ENCODE measurements at regions of chr6 and their contacts with region 1.

Region 1: GRCh38 chr6:131532580-131533039 is 40.4 kb upstream of the ARG1 start:
- DNase-seq: no peak
- ATAC-seq: peak; percentile 37; the same call in 2 of the 3 replicates
- H3K4me3 ChIP-seq: no peak overlapping the region
- H3K27ac ChIP-seq: no peak overlapping the region
- H3K4me1 ChIP-seq: peaks cover 34% of the 10 kb centered on the region
- H3K27me3 ChIP-seq: 0 out of 5 replicates have a peak, but pooled peaks cover 0 to 3% of the 10 kb centered on the region in 2 experiments
- CTCF ChIP-seq: no peak
- EP300 ChIP-seq: no peak
- POLR2A ChIP-seq: no peak
- RAD21 ChIP-seq: no peak

Region 2: GRCh38 chr6:131116749-131117360 is 415.8 kb before region 1 on chr6:
- CTCF ChIA-PET with region 1: no interaction called
- POLR2A ChIA-PET with region 1: no interaction called
- in situ Hi-C with region 1: no loop called
- intact Hi-C with region 1: loop called (anchors 5 kb)
- DNase-seq: peak; percentile 68
- ATAC-seq: peak; percentile 69
- H3K4me3 ChIP-seq: no peak overlapping the region
- H3K27ac ChIP-seq: no peak overlapping the region
- H3K4me1 ChIP-seq: peaks cover 14% of the 10 kb centered on the region
- H3K27me3 ChIP-seq: no peaks in the 10 kb centered on the region
- CTCF ChIP-seq: peak; percentile 80
- EP300 ChIP-seq: no peak
- POLR2A ChIP-seq: no peak
- RAD21 ChIP-seq: peak; percentile 77; the same call in 1 of the 2 replicates

Region 3: DNA sequence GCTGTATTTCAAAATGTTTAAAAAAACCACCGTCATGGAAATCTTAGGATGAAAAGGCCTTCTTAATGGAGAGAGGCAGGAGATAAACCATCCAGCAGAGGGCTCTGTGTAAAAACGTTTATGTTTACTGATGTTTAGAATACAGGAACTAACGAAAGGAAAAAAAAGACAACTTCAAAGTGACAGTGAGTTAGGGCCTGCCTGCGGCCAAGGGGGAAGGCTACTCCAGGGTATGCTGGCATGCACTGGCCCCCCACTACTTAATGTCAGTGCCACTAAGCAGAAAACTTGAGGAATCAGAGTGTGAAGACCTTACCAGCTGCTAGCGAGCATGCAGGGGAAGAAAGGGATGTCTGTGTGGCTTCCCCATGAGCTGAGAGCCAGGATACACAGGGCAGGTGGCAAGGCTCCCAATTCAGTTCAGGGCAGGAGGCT is 349.6 kb before region 1 on chr6:
- CTCF ChIA-PET with region 1: interaction called, 6 read pairs
- POLR2A ChIA-PET with region 1: no interaction called
- in situ Hi-C with region 1: loop called (anchors 5 kb)
- intact Hi-C with region 1: loop called (anchors 5 kb)
- DNase-seq: peak; percentile 35
- ATAC-seq: peak; percentile 74
- H3K4me3 ChIP-seq: no peak overlapping the region
- H3K27ac ChIP-seq: no peak overlapping the region
- H3K4me1 ChIP-seq: no peaks in the 10 kb centered on the region
- H3K27me3 ChIP-seq: no peaks in the 10 kb centered on the region; a peak in 1 of 5 replicates
- CTCF ChIP-seq: peak; percentile 37
- EP300 ChIP-seq: no peak
- POLR2A ChIP-seq: no peak
- RAD21 ChIP-seq: no peak

Region 4: GRCh38 chr6:131199568-131200272 is 332.9 kb before region 1 on chr6:
- CTCF ChIA-PET with region 1: interaction called, 13 read pairs
- POLR2A ChIA-PET with region 1: no interaction called
- in situ Hi-C with region 1: no loop called
- intact Hi-C with region 1: loop called (anchors 1 kb)
- DNase-seq: peak; percentile 63
- ATAC-seq: peak; percentile 99
- H3K4me3 ChIP-seq: no peak overlapping the region
- H3K27ac ChIP-seq: no peak overlapping the region
- H3K4me1 ChIP-seq: no peaks in the 10 kb centered on the region
- H3K27me3 ChIP-seq: no peaks in the 10 kb centered on the region
- CTCF ChIP-seq: peak; percentile 84
- EP300 ChIP-seq: no peak
- POLR2A ChIP-seq: no peak
- RAD21 ChIP-seq: peak; percentile 68; the same call in 1 of the 2 replicates

Region 5: DNA sequence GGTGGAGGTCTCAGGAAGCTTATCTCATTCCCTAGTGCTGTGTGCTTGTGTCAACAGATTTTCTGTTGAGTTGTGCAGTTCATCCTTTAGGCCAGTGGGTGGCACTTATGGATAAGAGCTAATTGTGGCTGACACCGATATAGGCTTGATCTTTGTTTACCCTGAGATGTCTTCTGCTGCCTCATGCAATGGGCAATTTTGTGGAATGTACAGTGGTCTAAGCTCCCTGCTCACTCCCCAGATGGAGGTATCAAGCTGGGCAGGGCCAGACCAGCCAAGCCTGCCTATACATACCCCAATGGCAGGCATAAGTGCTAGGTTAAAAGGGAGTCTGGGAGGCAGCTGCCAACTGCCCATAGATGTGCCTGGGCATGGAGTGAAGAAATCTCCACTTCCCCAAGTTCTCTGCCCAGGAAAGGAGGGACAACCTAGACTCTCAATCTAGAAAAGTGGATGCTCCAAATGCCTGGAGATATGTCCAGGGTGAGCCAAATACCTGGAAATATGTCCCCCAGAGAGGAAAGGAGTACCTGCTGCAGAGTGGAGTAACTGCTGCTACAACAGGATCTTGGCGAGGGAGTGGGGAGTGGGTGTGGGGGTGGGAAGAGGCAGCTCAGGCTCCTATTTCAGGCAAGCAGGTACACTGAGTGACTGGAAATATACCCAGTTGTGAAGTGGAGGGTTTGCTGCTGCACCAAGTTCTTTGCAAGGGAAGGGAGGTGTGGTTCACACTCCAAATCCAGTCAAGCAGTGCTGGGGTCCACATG is 12.8 kb before region 1 on chr6:
- CTCF ChIA-PET with region 1: interaction called, 3 read pairs
- POLR2A ChIA-PET with region 1: interaction called, 4 read pairs
- in situ Hi-C with region 1: no loop called
- intact Hi-C with region 1: loop called (anchors 2 kb)
- DNase-seq: peak; percentile 76
- ATAC-seq: peak; percentile 99
- H3K4me3 ChIP-seq: no peak overlapping the region
- H3K27ac ChIP-seq: no peak overlapping the region
- H3K4me1 ChIP-seq: peaks cover 8% of the 10 kb centered on the region; the same call in 1 of the 2 replicates
- H3K27me3 ChIP-seq: no peaks in the 10 kb centered on the region
- CTCF ChIP-seq: peak; percentile 98
- EP300 ChIP-seq: no peak
- POLR2A ChIP-seq: no peak
- RAD21 ChIP-seq: peak; percentile 88

Region 6: GRCh38 chr6:131545317-131545716 is 12.7 kb after region 1 on chr6:
- CTCF ChIA-PET with region 1: no interaction called
- POLR2A ChIA-PET with region 1: no interaction called
- in situ Hi-C with region 1: no loop called
- intact Hi-C with region 1: no loop called
- DNase-seq: no peak
- ATAC-seq: no peak
- H3K4me3 ChIP-seq: no peak overlapping the region
- H3K27ac ChIP-seq: no peak overlapping the region
- H3K4me1 ChIP-seq: no peaks in the 10 kb centered on the region
- H3K27me3 ChIP-seq: no peaks in the 10 kb centered on the region
- CTCF ChIP-seq: no peak
- EP300 ChIP-seq: no peak
- POLR2A ChIP-seq: no peak
- RAD21 ChIP-seq: no peak